ENCODE measurements at regions of chr6 and their contacts with region 1.

Region 1: DNA sequence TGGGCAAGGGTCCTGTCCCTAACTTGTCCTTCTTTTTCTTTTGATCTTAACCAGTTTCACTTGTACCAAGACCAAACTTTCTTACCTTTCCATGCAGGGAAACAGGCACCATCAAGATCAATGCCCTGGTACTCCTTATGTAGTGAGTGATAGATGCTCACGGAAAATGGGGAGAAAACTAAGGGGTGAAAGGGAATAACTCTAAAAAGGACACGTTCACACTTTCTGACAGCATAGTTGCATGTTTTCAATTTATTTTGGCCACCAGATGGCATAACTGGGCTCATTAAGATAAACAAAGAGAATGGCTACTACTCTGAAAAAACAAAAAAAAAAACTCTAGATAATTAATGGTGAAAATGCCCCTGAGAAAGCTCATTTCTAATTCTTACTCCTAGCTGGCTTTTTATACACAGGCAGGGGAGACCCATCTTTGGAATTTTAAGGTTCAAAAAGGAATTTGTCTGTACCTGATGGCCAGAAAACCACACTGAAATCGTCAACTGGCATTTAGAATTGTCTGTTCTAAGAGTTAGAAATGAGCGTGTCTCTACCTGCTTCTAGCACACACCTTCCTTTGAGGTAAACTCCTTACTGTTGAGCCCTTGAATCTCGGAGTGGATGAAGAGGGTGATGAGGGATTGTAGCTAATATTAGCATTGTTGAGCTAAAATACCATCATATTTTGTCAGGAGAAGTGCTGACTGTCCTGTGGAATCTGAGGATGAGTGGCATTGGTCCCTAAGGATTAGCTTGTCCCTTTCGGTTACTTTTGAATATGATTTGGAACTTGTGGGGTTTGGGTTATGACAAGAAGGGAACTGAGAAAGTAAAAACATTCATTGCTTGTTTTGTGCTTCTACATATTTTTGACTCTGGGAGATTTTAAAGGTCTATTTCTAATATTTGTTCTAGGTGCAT is 62.2 kb upstream of the DDR1 start:
- DNase-seq: no peak
- ATAC-seq: peak; percentile 59
- H3K4me3 Mint-ChIP-seq: no peak overlapping the region
- H3K27ac Mint-ChIP-seq: peak overlapping the region; percentile 54; the same call in 1 of the 2 replicates
- H3K4me1 Mint-ChIP-seq: peaks cover 30% of the 10 kb centered on the region
- H3K27me3 Mint-ChIP-seq: no peaks in the 10 kb centered on the region
- CTCF ChIP-seq: peak; percentile 18; the same call in 1 of the 2 replicates

Region 2: GRCh38 chr6:30775104-30775503 is 47.0 kb before region 1 on chr6:
- CTCF ChIA-PET with region 1: no interaction called
- POLR2A ChIA-PET with region 1: no interaction called
- DNase-seq: no peak
- ATAC-seq: no peak
- H3K4me3 Mint-ChIP-seq: no peak overlapping the region
- H3K27ac Mint-ChIP-seq: no peak overlapping the region
- H3K4me1 Mint-ChIP-seq: peaks cover 22% of the 10 kb centered on the region
- H3K27me3 Mint-ChIP-seq: peaks cover 3% of the 10 kb centered on the region; the same call in 1 of the 2 replicates
- CTCF ChIP-seq: no peak

Region 3: DNA sequence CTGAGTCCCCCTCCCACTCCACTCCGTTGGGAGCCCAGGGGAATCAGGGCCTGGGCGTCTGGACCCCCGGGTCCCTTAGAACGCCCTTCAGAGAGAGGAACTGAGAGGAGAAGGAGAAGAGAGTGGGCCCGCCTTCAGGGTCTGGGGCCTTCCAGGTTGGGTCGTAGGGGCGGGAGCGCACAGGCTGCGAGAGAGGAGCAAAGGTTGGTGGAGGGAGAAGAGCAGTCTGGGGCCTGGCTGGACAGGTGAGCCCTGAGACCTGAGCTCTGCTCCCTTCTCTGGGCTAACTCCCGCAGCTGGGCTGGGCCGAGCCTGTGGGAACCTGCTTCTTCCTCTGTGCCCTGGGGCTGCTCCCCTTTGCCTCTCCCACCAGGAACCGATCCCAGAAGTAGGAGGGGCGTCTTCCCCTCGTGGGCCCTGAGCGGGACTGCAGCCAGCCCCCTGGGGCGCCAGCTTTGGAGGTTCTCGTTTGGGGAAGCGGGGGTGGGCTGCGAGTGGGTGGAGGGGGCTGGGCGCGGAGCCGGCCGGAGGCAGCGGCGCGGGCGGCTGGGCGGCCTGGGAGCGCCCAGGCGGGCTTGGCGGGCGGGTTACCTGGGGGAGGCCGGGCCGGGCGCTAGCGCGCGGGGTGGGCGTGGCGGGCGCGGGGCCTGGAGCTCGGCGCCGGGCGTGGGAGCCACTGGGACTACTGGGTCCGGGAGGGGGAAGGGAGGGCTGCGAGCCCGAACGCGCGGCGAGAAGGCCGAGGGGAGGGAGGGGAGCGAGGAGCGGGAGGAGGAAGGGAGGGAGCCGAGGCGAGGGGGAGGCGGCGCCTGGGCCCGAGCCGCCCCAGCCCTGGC is 61.8 kb after region 1 on chr6 and contains the start of gene DDR1:
- CTCF ChIA-PET with region 1: interaction called, 164 read pairs
- POLR2A ChIA-PET with region 1: interaction called, 4 read pairs
- DNase-seq: peak; percentile 58
- ATAC-seq: peak; percentile 4
- H3K4me3 Mint-ChIP-seq: peak within 1 kb of the TSS; percentile 93
- H3K27ac Mint-ChIP-seq: peak within 1 kb of the TSS; percentile 99
- H3K4me1 Mint-ChIP-seq: peaks cover 71% of the 10 kb centered on the region
- H3K27me3 Mint-ChIP-seq: no peaks in the 10 kb centered on the region
- CTCF ChIP-seq: no peak
- total RNA-seq, gene DDR1: 195 to 230 TPM (median 203 TPM) in 3 replicates

Region 4: DNA sequence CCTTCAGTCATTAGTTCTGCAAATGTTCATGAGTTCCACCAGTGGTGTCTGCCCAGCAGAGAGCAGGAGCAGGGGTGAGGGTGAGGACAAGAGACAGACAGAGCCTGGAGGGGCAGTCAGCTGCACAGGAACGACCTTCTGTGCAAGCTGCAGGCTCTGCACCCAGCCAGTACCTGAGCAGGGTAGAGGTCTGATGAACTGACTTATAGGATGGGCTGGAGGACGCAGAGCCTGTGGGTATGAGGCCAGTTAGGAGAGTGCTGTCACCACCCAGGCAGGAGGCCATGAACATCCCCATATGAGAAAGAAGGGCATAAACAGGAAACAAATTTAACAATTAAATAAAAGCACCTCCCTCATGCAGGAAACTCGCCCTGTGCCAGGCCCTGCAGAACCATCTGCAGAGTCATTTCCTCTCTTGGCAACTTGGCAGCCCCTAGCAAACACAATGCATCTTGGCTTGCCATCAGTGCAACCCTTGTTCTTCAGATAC is 272.3 kb after region 1 on chr6:
- CTCF ChIA-PET with region 1: no interaction called
- POLR2A ChIA-PET with region 1: no interaction called
- DNase-seq: no peak
- ATAC-seq: no peak
- H3K4me3 Mint-ChIP-seq: no peak overlapping the region
- H3K27ac Mint-ChIP-seq: no peak overlapping the region
- H3K4me1 Mint-ChIP-seq: peaks cover 19% of the 10 kb centered on the region
- H3K27me3 Mint-ChIP-seq: no peaks in the 10 kb centered on the region
- CTCF ChIP-seq: no peak